ENCODE measurements at regions of chr18 and their contacts with region 1.

Region 1: GRCh38 chr18:74342416-74343043 is 26.9 kb downstream of the C18orf63 start:
- DNase-seq: no peak

Region 2: DNA sequence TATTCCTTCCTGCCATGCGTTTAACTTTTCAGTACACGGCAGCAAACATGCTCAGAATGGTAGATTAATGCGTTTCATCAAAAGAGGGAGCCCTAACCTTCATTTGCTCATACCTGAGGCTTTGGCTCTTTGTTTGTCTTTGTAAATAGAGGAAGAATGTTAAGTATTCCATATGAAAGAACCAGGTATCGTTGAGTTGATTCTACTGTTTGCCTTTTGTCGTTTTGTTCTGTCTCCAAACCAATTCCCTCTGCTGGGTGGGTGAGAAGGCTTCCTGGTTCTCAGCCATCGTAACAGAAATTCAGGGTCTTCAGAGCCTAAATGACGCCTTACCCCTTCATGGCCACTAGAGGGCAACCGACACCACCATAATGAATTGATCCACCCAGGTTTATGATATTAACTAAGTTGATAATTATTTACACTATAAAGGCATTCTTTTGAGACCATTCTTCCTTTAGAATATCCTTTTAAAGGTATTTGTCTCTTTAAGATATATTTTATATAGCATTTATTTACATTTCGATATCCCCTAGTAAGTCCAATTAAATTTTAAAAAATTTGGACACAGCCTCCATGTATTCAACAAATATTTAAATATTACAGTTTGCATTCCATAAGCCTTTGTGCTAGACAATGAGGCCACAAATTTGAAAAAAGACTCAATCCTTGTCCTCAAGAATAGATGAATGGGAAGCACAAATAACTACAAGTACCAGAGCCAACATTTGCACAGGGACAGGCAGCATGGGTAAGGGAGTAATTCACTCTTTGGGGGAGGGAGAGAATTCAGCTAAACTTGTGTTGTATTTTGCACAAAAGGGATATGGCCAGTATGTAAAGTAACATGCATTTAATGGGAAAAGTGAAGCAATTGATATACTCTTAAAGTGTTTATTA is 146.1 kb before region 1 on chr18:
- CTCF ChIA-PET with region 1: interaction called, 17 read pairs
- POLR2A ChIA-PET with region 1: no interaction called
- DNase-seq: peak; percentile 62

Region 3: GRCh38 chr18:75247611-75248421 is 905.3 kb after region 1 on chr18:
- CTCF ChIA-PET with region 1: no interaction called
- POLR2A ChIA-PET with region 1: no interaction called
- DNase-seq: no peak